H1 (cell line): ENCODE measurements at regions of chr9 and their contacts with region 1.

Region 1: GRCh38 chr9:133133681-133134418 is 12.8 kb upstream of the RALGDS start:
- DNase-seq: no peak
- H3K4me3 ChIP-seq: no peak overlapping the region
- H3K27ac ChIP-seq: peak overlapping the region; percentile 80
- H3K4me1 ChIP-seq: peaks cover 0 to 13% (median 10%) of the 10 kb centered on the region in 4 experiments; a peak in 5 of 7 replicates
- H3K27me3 ChIP-seq: no peaks in the 10 kb centered on the region; a peak in 1 of 7 replicates
- CTCF ChIP-seq: no peak
- EP300 ChIP-seq: 0 out of 3 replicates have a peak, but pooled peaks of 1 of the 2 experiments have one; percentile 10
- POLR2A ChIP-seq: no peak
- RAD21 ChIP-seq: no peak

Region 2: GRCh38 chr9:133121198-133121939 is 12.5 kb before region 1 on chr9 and contains the start of gene RALGDS:
- CTCF ChIA-PET with region 1: interaction called, 12 read pairs
- POLR2A ChIA-PET with region 1: interaction called, 4 read pairs
- DNase-seq: peak; percentile 38 to 94
- H3K4me3 ChIP-seq: peak within 1 kb of the TSS; percentile 51 to 79 (median 56)
- H3K27ac ChIP-seq: no peak within 1 kb of the TSS
- H3K4me1 ChIP-seq: peaks cover 0 to 17% (median 6%) of the 10 kb centered on the region in 4 experiments; a peak in 6 of 7 replicates
- H3K27me3 ChIP-seq: peaks cover 0 to 48% (median 33%) of the 10 kb centered on the region in 4 experiments; a peak in 5 of 7 replicates
- CTCF ChIP-seq: no peak
- EP300 ChIP-seq: no peak
- POLR2A ChIP-seq: no peak
- RAD21 ChIP-seq: no peak
- total RNA-seq, gene RALGDS: 11.2 and 14.5 TPM in 2 replicates

Region 3: DNA sequence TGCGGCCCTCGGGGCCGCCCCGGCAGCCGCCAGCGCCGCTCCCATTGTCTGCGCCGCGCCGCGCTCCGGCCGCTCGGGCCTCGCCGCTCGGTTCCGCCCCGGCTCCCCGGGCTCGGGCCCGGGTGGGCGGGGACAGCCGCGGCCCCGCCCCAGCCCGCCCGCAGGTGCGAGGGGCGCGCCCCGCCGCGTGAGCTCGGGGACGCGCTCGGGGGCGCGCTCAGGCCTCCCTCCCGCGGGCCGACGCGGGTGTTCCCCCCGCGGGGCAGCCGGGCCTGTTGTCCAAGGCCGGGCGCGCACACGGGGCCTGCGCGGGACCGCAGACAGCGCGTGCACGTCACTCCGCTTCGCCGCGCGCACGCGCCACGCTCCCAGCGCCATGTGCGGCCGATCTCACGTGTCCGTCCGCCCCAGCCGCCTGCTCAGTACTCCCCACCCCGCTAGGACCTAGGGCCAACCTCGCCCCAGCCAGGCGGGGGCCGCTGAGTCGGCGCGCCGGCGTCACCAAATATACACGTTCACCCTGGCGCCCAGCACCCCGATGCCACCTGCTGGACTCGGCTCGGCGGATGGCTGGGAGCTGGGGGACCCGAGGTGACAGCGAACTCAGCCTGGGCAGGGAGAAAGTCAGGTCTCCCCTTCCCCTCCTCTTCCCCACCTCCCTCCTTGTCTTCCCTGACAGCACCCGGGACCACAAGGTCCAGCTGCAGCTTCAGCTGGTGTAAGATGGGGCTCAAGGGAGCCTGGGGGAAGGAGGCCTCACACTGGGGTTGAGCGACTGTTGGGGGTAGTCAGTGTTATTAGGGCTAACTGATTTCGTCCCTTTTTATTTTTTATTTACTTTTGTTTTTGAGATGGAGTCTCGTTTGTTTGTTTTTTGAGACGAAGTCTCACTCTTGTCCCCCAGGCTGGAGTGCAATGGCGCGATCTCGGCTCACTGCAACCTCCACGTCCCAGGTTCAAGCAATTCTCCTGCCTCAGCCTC is 15.6 kb after region 1 on chr9:
- CTCF ChIA-PET with region 1: interaction called, 67 read pairs
- POLR2A ChIA-PET with region 1: interaction called, 12 read pairs
- DNase-seq: peak; percentile 73 to 90
- H3K4me3 ChIP-seq: peak overlapping the region; percentile 73 to 82 (median 76)
- H3K27ac ChIP-seq: no peak overlapping the region; the same call in 1 of the 2 replicates
- H3K4me1 ChIP-seq: peaks cover 0 to 15% (median 11%) of the 10 kb centered on the region in 4 experiments; a peak in 5 of 7 replicates
- H3K27me3 ChIP-seq: peaks cover 0 to 11% (median 0%) of the 10 kb centered on the region in 4 experiments; a peak in 2 of 7 replicates
- CTCF ChIP-seq: peak in 2 of 3 experiments; percentile 1 to 14; a peak in 1 of 4 replicates
- EP300 ChIP-seq: no peak
- POLR2A ChIP-seq: no peak; a peak in 2 of 3 replicates
- RAD21 ChIP-seq: 0 out of 4 replicates have a peak, but pooled peaks of 1 of the 2 experiments have one; percentile 6

Region 4: DNA sequence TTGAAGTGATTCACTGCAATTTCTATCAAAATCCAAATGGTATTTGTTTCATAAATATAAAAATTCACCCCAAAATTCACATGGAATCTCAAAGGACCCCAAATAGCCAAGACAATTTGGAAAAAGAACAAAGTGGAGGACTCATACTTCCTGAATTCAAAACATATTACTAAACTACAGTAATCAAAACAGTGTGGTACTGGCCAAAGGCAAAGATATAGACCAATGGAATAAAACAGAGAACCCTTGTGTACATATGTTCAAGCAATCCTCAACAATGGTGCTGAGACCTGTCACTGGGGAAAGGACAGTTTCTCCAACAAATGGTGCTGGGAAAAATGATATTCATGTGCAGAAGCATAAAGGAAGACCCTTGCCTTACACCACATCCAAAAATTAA is 61.2 kb after region 1 on chr9:
- CTCF ChIA-PET with region 1: no interaction called
- POLR2A ChIA-PET with region 1: no interaction called
- DNase-seq: no peak
- H3K4me3 ChIP-seq: no peak overlapping the region
- H3K27ac ChIP-seq: no peak overlapping the region
- H3K4me1 ChIP-seq: no peaks in the 10 kb centered on the region; a peak in 1 of 7 replicates
- H3K27me3 ChIP-seq: peaks cover 0 to 2% (median 0%) of the 10 kb centered on the region in 4 experiments; a peak in 2 of 7 replicates
- CTCF ChIP-seq: no peak
- EP300 ChIP-seq: no peak
- POLR2A ChIP-seq: no peak
- RAD21 ChIP-seq: no peak